ENCODE measurements at regions of chr12 and their contacts with region 1.

Region 1: GRCh38 chr12:121626087-121626852 is at the start of gene ORAI1:
- DNase-seq: peak; percentile 95 to 99 (median 98)
- ATAC-seq: peak; percentile 82 to 91 (median 88)
- H3K4me3 ChIP-seq: peak within 1 kb of the TSS; percentile 52 to 81 (median 62)
- H3K27ac ChIP-seq: peak within 1 kb of the TSS; percentile 81 to 96 (median 90)
- H3K4me1 ChIP-seq: peaks cover 0 to 22% (median 14%) of the 10 kb centered on the region in 3 donors
- H3K27me3 ChIP-seq: no peaks in the 10 kb centered on the region
- CTCF ChIP-seq: no peak
- total RNA-seq, gene ORAI1: 3.9 to 11.3 (median 5.8) TPM

Region 2: GRCh38 chr12:121334513-121335343 is 291.5 kb before region 1 on chr12:
- intact Hi-C with region 1: no loop called
- DNase-seq: no peak
- ATAC-seq: peak; percentile 68 to 92 (median 88)
- H3K4me3 ChIP-seq: no peak overlapping the region
- H3K27ac ChIP-seq: no peak overlapping the region
- H3K4me1 ChIP-seq: peaks cover 8 to 24% (median 19%) of the 10 kb centered on the region in 3 donors
- H3K27me3 ChIP-seq: no peaks in the 10 kb centered on the region
- CTCF ChIP-seq: peak; percentile 61 to 87 (median 75)

Region 3: DNA sequence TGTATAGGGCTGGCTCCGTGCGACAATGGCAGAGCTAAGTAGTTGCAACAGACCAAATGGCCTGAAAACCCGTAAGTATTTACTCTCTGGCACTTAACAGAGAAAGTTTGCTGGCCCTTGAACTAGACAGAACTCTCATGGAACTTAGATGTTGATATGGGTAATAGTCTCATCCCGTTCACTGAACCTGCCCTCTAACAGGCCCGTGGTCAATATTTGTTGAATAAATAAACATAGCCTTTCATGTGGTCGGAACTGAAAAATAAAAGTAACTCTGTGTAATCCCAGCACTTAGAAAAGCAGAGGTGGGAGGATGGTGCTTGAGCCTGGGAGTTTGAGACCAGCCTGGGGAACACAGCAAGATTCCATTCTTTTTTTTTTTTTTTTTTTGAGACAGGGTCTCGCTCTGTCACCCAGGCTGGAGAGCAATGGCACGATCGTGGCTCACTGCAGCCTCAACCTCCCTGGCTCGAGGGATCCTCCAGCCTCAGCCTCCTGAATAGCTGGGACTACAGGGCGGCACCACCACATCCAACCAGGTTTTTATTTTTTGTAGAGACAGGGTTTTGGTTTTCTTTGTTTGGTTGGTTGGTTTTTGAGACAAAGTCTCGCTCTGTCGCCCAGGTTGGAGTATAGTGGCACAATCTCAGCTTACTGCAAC is 75.2 kb before region 1 on chr12:
- intact Hi-C with region 1: no loop called
- DNase-seq: peak in 1 of 6 donors; percentile 9
- ATAC-seq: no peak
- H3K4me3 ChIP-seq: no peak overlapping the region
- H3K27ac ChIP-seq: no peak overlapping the region
- H3K4me1 ChIP-seq: no peaks in the 10 kb centered on the region
- H3K27me3 ChIP-seq: no peaks in the 10 kb centered on the region
- CTCF ChIP-seq: no peak

Region 4: GRCh38 chr12:121579981-121580868 is 46.0 kb before region 1 on chr12:
- intact Hi-C with region 1: loop called in 1 of 3 experiments (anchors 10 kb)
- DNase-seq: peak; percentile 61 to 86 (median 76)
- ATAC-seq: peak; percentile 71 to 75 (median 74)
- H3K4me3 ChIP-seq: peak overlapping the region; percentile 45 to 74 (median 57)
- H3K27ac ChIP-seq: peak overlapping the region; percentile 51 to 81 (median 80)
- H3K4me1 ChIP-seq: peaks cover 0 to 26% (median 0%) of the 10 kb centered on the region in 3 donors
- H3K27me3 ChIP-seq: no peaks in the 10 kb centered on the region
- CTCF ChIP-seq: no peak

Region 5: GRCh38 chr12:121678716-121679580 is 52.7 kb after region 1 on chr12:
- intact Hi-C with region 1: loop called in 1 of 3 experiments (anchors 5 kb)
- DNase-seq: peak in 1 of 6 donors; percentile 3
- ATAC-seq: peak in 1 of 4 donors; percentile 17
- H3K4me3 ChIP-seq: no peak overlapping the region
- H3K27ac ChIP-seq: peak overlapping the region in 1 of 4 donors; percentile 2
- H3K4me1 ChIP-seq: no peaks in the 10 kb centered on the region
- H3K27me3 ChIP-seq: no peaks in the 10 kb centered on the region
- CTCF ChIP-seq: no peak